Breast epithelium (tissue), 4 donors: ENCODE measurements at regions of chr9 and their contacts with region 1.

Region 1: DNA sequence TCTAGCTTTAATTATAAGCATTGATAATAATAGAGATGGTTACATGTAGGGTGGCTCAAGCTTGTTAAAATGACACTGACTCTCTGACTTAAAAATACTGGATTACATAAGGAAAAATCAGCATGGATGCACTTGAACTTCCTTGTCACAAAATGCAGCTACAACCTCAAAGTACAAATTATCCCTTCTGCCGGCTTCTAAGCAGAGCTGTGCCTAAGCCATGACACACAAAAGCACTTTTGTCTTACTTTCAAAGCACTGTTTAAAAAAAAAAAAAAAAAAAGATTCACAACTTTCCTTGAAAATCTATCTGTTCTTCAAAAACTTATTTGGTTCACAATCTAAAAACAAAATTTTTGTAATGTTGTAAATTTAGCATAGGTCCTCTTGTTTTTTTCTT is 36.4 kb upstream of the ZFAND5 start:
- DNase-seq: no peak
- H3K4me3 ChIP-seq: no peak overlapping the region
- H3K27ac ChIP-seq: no peak overlapping the region
- H3K4me1 ChIP-seq: no peaks in the 10 kb centered on the region
- H3K27me3 ChIP-seq: no peaks in the 10 kb centered on the region
- CTCF ChIP-seq: no peak
- POLR2A ChIP-seq: no peak

Region 2: DNA sequence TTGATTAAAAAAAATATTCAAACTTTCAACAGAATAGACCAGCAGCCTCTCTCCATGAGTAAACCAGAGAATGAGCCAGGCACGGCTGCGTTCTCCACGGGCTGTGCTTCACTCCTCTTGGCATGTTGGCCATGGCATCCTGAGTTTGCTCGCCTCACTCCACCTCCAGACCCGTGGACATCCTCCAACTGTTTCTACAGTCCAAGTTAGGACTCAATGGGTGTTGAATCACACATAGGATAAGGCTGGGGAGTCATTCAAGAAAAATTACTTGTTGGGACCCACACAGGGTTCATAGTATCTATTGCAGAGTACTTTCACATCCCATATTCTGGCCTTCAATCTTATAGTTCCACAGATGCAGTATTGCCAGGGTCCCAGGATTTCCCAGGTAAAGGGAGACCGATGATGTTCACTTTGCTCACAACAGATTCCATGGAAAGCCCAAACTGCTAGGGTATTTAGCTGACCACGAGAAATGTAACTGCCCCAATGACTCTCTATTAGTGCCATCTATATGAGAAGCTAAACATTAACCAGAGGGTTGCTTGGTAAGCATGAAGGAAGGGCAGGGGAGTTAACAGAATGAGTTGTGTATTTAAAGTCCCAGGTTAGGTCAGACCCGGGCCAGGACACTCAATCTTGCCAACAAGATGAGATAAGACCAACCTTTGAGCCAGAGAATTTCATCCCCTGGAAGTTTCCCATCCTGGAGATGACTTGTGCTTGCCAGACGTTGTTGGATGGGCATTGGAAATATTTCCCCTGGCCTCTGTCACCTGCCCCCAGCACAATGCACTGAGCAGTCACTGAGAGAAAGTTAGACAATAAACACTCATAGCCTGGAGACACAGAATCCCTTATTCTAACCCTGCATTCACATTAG is 271.9 kb before region 1 on chr9:
- intact Hi-C with region 1: no loop called
- DNase-seq: no peak
- H3K4me3 ChIP-seq: no peak overlapping the region
- H3K27ac ChIP-seq: no peak overlapping the region
- H3K4me1 ChIP-seq: no peaks in the 10 kb centered on the region
- H3K27me3 ChIP-seq: no peaks in the 10 kb centered on the region
- CTCF ChIP-seq: no peak
- POLR2A ChIP-seq: no peak

Region 3: GRCh38 chr9:72322259-72322658 is 79.1 kb before region 1 on chr9:
- intact Hi-C with region 1: loop called (anchors 5 kb)
- DNase-seq: no peak
- H3K4me3 ChIP-seq: no peak overlapping the region
- H3K27ac ChIP-seq: no peak overlapping the region
- H3K4me1 ChIP-seq: no peaks in the 10 kb centered on the region
- H3K27me3 ChIP-seq: no peaks in the 10 kb centered on the region
- CTCF ChIP-seq: no peak
- POLR2A ChIP-seq: no peak

Region 4: DNA sequence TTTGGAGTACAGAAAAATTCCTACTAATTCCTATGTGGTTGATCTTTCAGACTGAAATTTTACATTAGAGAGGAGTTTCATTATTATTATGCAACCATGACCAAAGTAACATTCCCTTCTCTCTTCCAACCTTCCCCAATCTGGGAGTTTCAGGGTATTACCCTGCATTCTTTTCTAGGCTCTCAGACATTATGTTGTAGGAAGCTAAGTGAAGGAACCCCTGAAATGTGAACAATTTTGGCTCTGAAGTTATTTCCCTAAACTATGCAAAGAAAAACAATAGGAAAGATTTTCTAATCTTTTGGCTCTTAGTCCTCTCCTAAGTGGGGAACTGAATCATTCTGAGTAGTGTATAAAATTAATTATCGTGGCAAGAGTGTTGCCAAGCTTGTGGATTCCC is 26.9 kb after region 1 on chr9:
- intact Hi-C with region 1: no loop called
- DNase-seq: no peak
- H3K4me3 ChIP-seq: no peak overlapping the region
- H3K27ac ChIP-seq: no peak overlapping the region
- H3K4me1 ChIP-seq: no peaks in the 10 kb centered on the region
- H3K27me3 ChIP-seq: no peaks in the 10 kb centered on the region
- CTCF ChIP-seq: no peak
- POLR2A ChIP-seq: no peak